T-cell (primary cell): ENCODE measurements at regions of chr2 and their contacts with region 1.

Region 1: GRCh38 chr2:65514555-65515195 is 82.3 kb upstream of the SPRED2 start:
- DNase-seq: no peak
- ATAC-seq: no peak
- H3K4me3 ChIP-seq: no peak overlapping the region
- H3K4me3 Mint-ChIP-seq: no peak overlapping the region
- H3K27ac ChIP-seq: no peak overlapping the region
- H3K27ac Mint-ChIP-seq: no peak overlapping the region
- H3K4me1 ChIP-seq: no peaks in the 10 kb centered on the region
- H3K4me1 Mint-ChIP-seq: no peaks in the 10 kb centered on the region
- H3K27me3 ChIP-seq: no peaks in the 10 kb centered on the region
- H3K27me3 Mint-ChIP-seq: peaks cover 0 to 9% of the 10 kb centered on the region in 2 donors

Region 2: GRCh38 chr2:65501074-65501473 is 13.6 kb before region 1 on chr2:
- CTCF ChIA-PET with region 1: interaction called in 1 of 2 experiments, 11 read pairs
- POLR2A ChIA-PET with region 1: no interaction called
- DNase-seq: no peak
- ATAC-seq: no peak
- H3K4me3 ChIP-seq: no peak overlapping the region
- H3K4me3 Mint-ChIP-seq: no peak overlapping the region
- H3K27ac ChIP-seq: no peak overlapping the region
- H3K27ac Mint-ChIP-seq: no peak overlapping the region
- H3K4me1 ChIP-seq: no peaks in the 10 kb centered on the region
- H3K4me1 Mint-ChIP-seq: no peaks in the 10 kb centered on the region
- H3K27me3 ChIP-seq: peaks cover 0 to 8% of the 10 kb centered on the region in 2 experiments
- H3K27me3 Mint-ChIP-seq: peaks cover 6 to 13% of the 10 kb centered on the region in 2 donors

Region 3: GRCh38 chr2:65834771-65835475 is 320.2 kb after region 1 on chr2:
- CTCF ChIA-PET with region 1: no interaction called
- POLR2A ChIA-PET with region 1: no interaction called
- DNase-seq: no peak
- ATAC-seq: no peak
- H3K4me3 ChIP-seq: no peak overlapping the region
- H3K4me3 Mint-ChIP-seq: no peak overlapping the region
- H3K27ac ChIP-seq: no peak overlapping the region
- H3K27ac Mint-ChIP-seq: no peak overlapping the region
- H3K4me1 ChIP-seq: no peaks in the 10 kb centered on the region
- H3K4me1 Mint-ChIP-seq: no peaks in the 10 kb centered on the region
- H3K27me3 ChIP-seq: no peaks in the 10 kb centered on the region
- H3K27me3 Mint-ChIP-seq: peaks cover 0 to 8% of the 10 kb centered on the region in 2 donors